ENCODE measurements at regions of chr3 and their contacts with region 1.

Region 1: DNA sequence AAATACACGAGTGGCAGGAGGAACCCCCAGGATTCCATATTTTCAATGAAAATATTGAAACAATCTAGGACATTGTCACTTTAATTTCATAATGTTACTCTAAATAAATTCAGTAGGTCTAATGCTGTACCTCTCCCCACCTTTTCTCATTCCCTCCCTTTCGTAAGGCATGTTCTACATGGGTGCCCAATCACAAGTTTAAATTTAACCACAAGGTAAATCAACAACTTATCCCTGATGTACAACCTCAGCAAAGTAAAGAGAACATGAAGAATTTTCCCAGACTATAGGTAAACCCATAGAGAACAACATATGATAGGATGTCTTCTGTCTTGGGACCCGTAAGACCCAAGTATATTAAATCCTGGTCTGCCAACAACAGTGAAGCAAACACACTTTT is 53.2 kb upstream of the MITF start:
- DNase-seq: no peak
- H3K4me3 ChIP-seq: no peak overlapping the region
- H3K27ac ChIP-seq: no peak overlapping the region
- H3K4me1 ChIP-seq: no peaks in the 10 kb centered on the region
- H3K27me3 ChIP-seq: no peaks in the 10 kb centered on the region
- CTCF ChIP-seq: no peak
- POLR2A ChIP-seq: no peak

Region 2: DNA sequence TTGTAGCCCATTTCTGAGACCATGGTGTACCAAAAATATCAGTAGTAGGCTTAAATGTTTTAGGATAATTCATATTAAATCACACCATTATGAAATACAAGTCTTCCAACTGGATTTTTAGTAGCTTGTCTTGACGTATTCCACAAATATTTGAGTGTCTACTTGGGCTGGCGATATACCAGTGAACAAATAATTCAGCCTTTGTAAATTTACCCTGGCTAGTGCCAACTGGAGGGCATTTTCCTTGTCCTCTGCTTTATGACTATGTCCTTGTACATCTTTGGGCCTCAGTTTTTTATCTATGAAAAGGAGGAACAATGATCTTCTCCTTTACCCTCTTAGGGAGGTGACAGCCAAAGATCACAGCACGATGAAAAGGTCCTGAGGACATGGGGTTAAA is 415.0 kb before region 1 on chr3:
- intact Hi-C with region 1: no loop called
- DNase-seq: no peak
- H3K4me3 ChIP-seq: no peak overlapping the region
- H3K27ac ChIP-seq: no peak overlapping the region
- H3K4me1 ChIP-seq: peaks cover 1 to 8% of the 10 kb centered on the region in 2 donors
- H3K27me3 ChIP-seq: no peaks in the 10 kb centered on the region
- CTCF ChIP-seq: no peak
- POLR2A ChIP-seq: no peak

Region 3: DNA sequence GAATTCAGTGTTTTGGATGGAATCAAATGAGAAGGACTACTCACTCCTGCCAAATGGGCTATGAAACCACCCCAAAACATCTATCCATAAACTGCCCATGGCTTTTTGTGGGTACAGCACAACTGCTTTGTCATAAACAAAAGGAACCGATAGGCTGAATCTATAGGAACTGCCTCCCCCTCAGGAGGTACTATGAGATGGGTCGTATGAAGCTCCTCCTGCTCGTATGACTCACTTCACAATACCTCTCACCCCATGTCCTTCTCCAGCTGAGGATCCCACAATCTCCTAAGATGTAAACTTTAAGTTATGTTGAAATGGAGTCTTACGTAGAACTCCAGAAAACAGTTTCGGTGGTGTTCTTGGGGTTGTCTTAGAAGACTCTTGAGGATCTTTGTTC is 183.6 kb after region 1 on chr3:
- intact Hi-C with region 1: no loop called
- DNase-seq: no peak
- H3K4me3 ChIP-seq: no peak overlapping the region
- H3K27ac ChIP-seq: no peak overlapping the region
- H3K4me1 ChIP-seq: peaks cover 20 to 24% of the 10 kb centered on the region in 2 donors
- H3K27me3 ChIP-seq: no peaks in the 10 kb centered on the region
- CTCF ChIP-seq: no peak
- POLR2A ChIP-seq: no peak

Region 4: DNA sequence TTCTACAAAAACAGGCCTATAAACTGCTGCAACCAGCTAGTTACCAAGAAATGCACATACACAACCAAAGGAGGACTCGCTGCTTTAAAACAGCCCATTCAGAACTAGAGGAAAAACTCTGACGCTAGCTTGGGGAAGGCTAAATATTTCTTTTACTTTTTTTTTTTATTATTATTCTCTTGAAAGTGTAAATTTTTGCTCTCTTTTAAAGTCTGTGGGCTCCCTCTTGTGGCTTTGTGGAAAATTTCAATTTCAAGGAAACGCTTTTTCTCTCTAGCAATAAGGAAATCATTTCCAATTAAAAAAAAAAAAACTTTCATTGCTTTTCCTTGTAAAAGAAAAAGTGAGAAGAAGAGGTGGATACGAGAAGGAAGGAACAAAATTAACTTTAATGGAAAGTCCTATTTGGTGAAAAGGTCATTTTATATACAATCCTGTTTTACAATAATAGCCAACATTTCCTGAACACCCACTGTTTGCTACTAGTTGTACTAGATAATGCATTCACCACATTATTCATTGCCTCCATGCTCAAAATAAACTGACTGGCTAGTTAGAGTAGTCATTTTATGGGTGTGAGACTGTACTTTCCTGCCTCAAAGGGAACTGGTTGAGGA is 262.3 kb after region 1 on chr3:
- intact Hi-C with region 1: loop called (anchors 5 kb)
- DNase-seq: no peak
- H3K4me3 ChIP-seq: no peak overlapping the region
- H3K27ac ChIP-seq: no peak overlapping the region
- H3K4me1 ChIP-seq: no peaks in the 10 kb centered on the region
- H3K27me3 ChIP-seq: no peaks in the 10 kb centered on the region
- CTCF ChIP-seq: peak; percentile 16 to 83 (median 54)
- POLR2A ChIP-seq: no peak

Region 5: GRCh38 chr3:71087143-71088018 is 1401.3 kb after region 1 on chr3:
- intact Hi-C with region 1: no loop called
- DNase-seq: no peak
- H3K4me3 ChIP-seq: no peak overlapping the region
- H3K27ac ChIP-seq: no peak overlapping the region
- H3K4me1 ChIP-seq: no peaks in the 10 kb centered on the region
- H3K27me3 ChIP-seq: no peaks in the 10 kb centered on the region
- CTCF ChIP-seq: no peak
- POLR2A ChIP-seq: no peak